Activated CD8-positive, alpha-beta T cell treated with anti-CD3 and anti-CD28 coated beads for 36 hours (primary cell): ENCODE measurements at regions of chr3 and their contacts with region 1.

Region 1: GRCh38 chr3:127598841-127599570 is 795 bp downstream of the MCM2 start:
- DNase-seq: no peak
- ATAC-seq: no peak
- H3K4me3 Mint-ChIP-seq: peak overlapping the region; percentile 91
- H3K27ac Mint-ChIP-seq: peak overlapping the region; percentile 98
- H3K4me1 Mint-ChIP-seq: peaks cover 39% of the 10 kb centered on the region
- H3K27me3 Mint-ChIP-seq: no peaks in the 10 kb centered on the region
- CTCF ChIP-seq: no peak

Region 2: GRCh38 chr3:127025456-127025855 is 573.5 kb before region 1 on chr3:
- CTCF ChIA-PET with region 1: no interaction called
- POLR2A ChIA-PET with region 1: no interaction called
- intact Hi-C with region 1: no loop called
- DNase-seq: no peak
- ATAC-seq: no peak
- H3K4me3 Mint-ChIP-seq: no peak overlapping the region
- H3K27ac Mint-ChIP-seq: no peak overlapping the region
- H3K4me1 Mint-ChIP-seq: no peaks in the 10 kb centered on the region
- H3K27me3 Mint-ChIP-seq: no peaks in the 10 kb centered on the region
- CTCF ChIP-seq: no peak

Region 3: DNA sequence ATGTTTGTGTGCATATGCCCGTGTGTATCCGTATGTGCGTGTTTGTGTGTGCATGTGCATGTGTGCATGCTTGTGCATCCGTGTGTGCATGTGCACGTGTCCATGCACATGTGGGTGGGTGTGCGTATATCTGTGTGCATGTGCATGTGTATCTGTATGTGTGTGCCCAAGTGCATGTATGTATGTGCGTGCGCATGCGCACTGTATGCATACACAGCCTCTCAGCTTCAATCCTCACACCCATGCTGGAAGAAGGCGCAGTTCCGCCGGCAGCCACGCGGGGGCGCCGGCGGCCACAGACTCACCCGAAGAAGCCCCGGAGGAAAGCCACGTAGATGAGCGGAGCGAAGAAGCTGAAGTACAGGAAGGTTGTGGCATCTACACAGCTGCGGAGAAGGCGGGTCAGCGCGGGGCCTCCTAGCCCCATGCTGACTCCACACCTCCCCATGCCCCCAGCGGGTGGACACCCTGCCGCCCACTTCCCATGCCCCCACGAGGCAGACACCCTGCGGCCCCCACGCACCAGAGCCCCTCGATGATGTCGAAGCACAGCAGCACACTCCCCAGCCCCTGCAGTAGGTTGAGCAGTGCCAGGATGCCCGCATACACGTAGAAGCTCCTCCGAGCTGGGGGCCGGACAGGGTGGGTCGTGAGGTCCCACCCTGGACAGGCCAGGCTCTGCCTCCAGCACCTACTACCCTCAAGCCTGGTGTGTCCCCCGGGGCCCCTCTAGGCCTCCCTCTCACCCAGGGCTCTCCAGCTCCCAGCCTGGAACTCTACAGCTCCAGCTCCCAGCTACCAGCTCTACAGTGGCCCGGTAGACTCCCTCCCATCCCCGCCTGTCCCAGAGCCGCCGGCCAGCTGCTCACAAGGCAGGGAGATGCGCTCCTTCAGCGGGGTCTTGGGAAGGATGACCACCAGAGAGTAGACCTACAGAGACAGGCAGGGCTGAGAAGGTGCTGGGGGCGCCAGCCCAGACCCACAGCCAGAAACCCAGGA is 23.8 kb before region 1 on chr3:
- CTCF ChIA-PET with region 1: interaction called, 19 read pairs
- POLR2A ChIA-PET with region 1: interaction called, 10 read pairs
- intact Hi-C with region 1: no loop called
- DNase-seq: peak; percentile 89
- ATAC-seq: peak; percentile 98
- H3K4me3 Mint-ChIP-seq: no peak overlapping the region
- H3K27ac Mint-ChIP-seq: no peak overlapping the region
- H3K4me1 Mint-ChIP-seq: peaks cover 14% of the 10 kb centered on the region
- H3K27me3 Mint-ChIP-seq: no peaks in the 10 kb centered on the region
- CTCF ChIP-seq: peak; percentile 86

Region 4: GRCh38 chr3:127612966-127613365 is 14.0 kb after region 1 on chr3:
- CTCF ChIA-PET with region 1: no interaction called
- POLR2A ChIA-PET with region 1: interaction called, 74 read pairs
- intact Hi-C with region 1: no loop called
- DNase-seq: no peak
- ATAC-seq: no peak
- H3K4me3 Mint-ChIP-seq: no peak overlapping the region
- H3K27ac Mint-ChIP-seq: no peak overlapping the region
- H3K4me1 Mint-ChIP-seq: peaks cover 10% of the 10 kb centered on the region
- H3K27me3 Mint-ChIP-seq: no peaks in the 10 kb centered on the region
- CTCF ChIP-seq: no peak

Region 5: GRCh38 chr3:127622772-127623576 is 24.0 kb after region 1 on chr3:
- CTCF ChIA-PET with region 1: interaction called, 3 read pairs
- POLR2A ChIA-PET with region 1: interaction called, 50 read pairs
- intact Hi-C with region 1: no loop called
- DNase-seq: no peak
- ATAC-seq: no peak
- H3K4me3 Mint-ChIP-seq: no peak overlapping the region
- H3K27ac Mint-ChIP-seq: no peak overlapping the region
- H3K4me1 Mint-ChIP-seq: peaks cover 17% of the 10 kb centered on the region
- H3K27me3 Mint-ChIP-seq: peaks cover 9% of the 10 kb centered on the region
- CTCF ChIP-seq: no peak

Region 6: DNA sequence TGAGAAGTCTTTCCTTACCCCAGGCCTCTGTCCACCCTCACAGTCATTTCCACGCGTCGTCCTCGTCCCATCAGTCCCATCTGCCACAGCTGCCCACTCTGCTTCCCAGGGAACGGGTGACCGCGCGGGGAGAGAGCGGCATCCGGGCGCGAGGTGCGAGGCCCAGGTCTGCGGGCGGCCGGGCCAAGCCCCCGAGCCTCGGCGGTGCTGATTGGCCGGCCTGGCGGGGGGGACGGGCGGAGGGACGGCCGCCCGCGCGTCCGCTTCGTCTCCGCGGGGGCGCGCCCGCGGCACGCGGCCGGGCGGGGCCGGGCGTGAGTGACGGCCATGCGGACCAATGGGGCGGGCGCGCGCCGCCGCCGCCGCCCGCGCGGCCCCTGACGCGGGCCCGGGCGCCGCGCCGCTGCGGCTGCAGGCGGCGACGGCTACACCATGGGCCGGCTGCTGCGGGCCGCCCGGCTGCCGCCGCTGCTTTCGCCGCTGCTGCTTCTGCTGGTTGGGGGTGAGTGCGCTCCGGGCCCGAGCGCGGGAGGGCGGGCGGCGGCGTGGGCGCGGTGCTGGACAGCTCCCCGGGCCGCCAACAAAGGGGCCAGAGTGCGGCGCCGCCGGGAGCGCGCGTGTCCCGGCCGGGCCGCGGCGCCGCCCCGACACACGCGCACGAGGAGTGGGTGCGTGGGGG is 29.9 kb after region 1 on chr3 and contains the start of gene PODXL2:
- CTCF ChIA-PET with region 1: interaction called, 3 read pairs
- POLR2A ChIA-PET with region 1: interaction called, 19 read pairs
- intact Hi-C with region 1: no loop called
- DNase-seq: peak; percentile 26
- ATAC-seq: peak; percentile 47
- H3K4me3 Mint-ChIP-seq: peak within 1 kb of the TSS; percentile 65
- H3K27ac Mint-ChIP-seq: no peak within 1 kb of the TSS
- H3K4me1 Mint-ChIP-seq: peaks cover 30% of the 10 kb centered on the region
- H3K27me3 Mint-ChIP-seq: peaks cover 30% of the 10 kb centered on the region
- CTCF ChIP-seq: no peak
- total RNA-seq, gene PODXL2: 1.1 to 1.3 TPM

Region 7: DNA sequence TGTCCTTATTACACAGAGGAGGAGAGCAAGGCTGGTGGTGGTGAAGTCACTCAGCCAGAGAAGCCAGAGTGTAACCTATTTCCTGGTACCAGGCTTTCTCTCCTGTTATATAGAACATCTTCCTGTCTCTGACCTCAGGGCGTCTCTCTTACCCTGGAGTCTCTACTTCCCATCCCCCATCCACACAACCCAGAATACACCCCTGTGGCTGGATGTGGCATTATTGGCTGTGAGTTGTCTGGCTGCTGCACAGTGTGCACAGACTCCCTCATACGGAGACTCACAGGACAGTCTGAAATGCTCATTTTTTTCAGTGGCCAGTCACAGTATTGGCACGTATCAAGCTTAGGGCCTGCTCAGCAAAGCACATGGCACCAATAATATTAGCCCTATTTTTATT is 38.5 kb after region 1 on chr3:
- CTCF ChIA-PET with region 1: no interaction called
- POLR2A ChIA-PET with region 1: interaction called, 10 read pairs
- intact Hi-C with region 1: no loop called
- DNase-seq: peak; percentile 60
- ATAC-seq: peak; percentile 97
- H3K4me3 Mint-ChIP-seq: no peak overlapping the region
- H3K27ac Mint-ChIP-seq: no peak overlapping the region
- H3K4me1 Mint-ChIP-seq: peaks cover 8% of the 10 kb centered on the region
- H3K27me3 Mint-ChIP-seq: peaks cover 5% of the 10 kb centered on the region
- CTCF ChIP-seq: no peak

Region 8: DNA sequence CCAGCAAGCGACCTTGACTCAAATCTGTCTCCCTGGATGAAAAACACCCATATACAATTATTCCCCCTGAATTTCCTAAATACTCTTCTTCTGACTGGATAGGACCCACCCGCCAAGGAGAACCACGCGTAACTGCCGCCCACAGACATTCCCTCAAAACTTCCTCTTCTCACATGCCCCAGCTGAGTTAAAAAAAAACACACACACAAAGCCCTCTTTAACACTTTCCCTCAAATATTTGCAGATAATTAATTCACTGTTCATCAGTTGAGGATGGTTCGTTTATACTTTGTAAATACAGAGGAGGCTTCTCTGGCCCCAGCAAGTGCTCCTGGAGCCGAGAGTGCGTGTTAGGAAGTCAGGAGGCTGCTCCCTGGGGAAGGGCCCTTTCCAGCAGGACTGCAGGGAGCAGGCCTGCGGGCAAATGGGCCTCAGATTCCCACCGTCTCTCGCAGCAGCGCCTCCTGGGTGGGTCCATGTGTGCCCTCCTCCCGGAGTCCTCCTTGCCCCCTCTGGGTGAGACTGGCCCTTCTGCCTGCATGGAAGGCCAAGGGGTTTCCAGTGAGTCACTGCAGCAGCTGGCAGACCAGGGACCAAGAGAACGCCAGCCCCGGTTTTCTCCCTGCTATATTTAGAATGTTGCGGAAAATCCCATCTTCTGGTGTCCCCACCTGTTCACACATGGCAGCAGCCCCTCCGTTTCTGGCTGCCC is 176.5 kb after region 1 on chr3:
- CTCF ChIA-PET with region 1: no interaction called
- POLR2A ChIA-PET with region 1: no interaction called
- intact Hi-C with region 1: no loop called
- DNase-seq: no peak
- ATAC-seq: no peak
- H3K4me3 Mint-ChIP-seq: no peak overlapping the region
- H3K27ac Mint-ChIP-seq: no peak overlapping the region
- H3K4me1 Mint-ChIP-seq: peaks cover 13% of the 10 kb centered on the region
- H3K27me3 Mint-ChIP-seq: no peaks in the 10 kb centered on the region
- CTCF ChIP-seq: no peak

Region 9: DNA sequence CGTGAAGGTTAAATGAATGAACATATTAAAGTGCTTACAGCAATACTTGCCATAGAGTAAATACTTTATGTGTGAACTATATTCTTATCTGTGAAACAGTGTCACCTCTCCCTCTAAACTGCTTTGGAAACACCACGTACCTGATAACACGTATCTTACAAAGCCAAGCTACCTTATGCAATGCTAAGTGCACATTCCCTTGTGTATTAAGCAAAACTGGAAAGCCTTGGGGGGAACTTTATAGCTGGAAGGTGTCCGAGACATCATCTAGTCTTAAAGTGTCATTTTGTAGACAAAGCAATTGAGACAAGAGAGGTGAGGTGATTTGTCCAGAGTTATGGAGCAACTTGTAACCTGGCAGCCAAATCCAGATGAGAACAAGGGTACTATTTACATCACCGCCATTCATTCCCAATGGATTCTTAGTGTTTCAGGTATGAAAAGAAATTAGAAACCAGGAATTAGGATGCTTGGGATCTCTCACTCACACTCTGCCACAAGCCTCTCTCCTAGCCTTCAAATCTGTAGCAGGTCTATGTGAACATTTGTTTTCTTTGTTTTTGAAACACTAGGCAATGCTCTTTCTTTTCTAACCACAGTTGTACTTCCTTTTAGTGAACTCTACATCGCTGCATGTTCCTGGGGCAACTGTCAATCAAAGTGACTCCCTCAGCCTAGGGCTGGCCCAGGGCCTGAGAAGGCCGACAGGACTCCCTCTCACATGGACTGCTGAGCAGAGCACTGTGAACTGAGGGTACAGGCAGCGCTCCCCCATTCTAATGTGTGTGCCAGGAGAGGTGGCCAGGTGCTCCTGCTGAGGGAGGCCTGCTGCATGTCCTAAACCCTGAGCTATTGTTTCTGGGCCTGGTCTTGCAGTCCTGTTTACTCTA is 237.2 kb after region 1 on chr3:
- CTCF ChIA-PET with region 1: no interaction called
- POLR2A ChIA-PET with region 1: no interaction called
- intact Hi-C with region 1: no loop called
- DNase-seq: no peak
- ATAC-seq: no peak
- H3K4me3 Mint-ChIP-seq: no peak overlapping the region
- H3K27ac Mint-ChIP-seq: no peak overlapping the region
- H3K4me1 Mint-ChIP-seq: peaks cover 4% of the 10 kb centered on the region
- H3K27me3 Mint-ChIP-seq: peaks cover 13% of the 10 kb centered on the region
- CTCF ChIP-seq: no peak

Region 10: DNA sequence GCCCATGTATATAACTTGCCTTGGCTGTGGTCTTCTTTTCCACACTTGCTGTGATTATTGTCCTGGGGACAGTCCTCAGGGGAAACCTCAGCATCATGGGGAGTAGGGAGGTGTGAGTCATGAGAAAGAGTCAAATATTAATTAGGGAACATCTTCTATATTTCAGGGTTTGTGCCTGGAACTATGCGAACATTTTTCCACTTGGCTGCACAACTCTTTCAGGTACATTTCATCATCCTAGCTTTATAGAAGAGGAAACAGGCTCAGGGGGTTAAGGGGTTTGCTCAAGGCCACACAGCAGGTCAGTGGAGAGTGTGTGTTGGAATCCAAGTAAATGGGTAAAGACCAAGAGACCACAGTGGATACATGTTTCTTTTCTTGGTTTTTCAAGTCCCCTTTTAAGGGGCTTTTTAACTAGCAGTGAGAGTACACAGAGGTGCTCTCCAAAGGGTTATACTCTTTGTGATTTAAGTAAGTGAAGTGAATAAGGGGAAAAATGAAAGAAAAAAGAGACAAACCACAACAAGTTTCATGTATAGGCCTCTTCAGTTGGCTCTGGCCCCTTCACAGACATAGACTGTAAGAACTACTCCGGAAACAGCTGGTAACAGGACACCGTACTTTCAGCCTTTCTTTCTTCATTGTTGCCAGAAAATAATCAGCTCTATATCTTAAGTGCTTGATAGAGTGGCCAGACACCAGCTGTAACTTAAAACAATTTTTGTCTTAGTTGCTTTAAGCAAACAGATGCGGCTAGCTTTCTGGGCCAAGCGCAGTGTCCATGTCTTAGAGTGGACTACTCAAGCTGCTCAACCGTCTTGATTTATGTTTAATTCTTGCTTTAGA is 618.9 kb after region 1 on chr3:
- CTCF ChIA-PET with region 1: no interaction called
- POLR2A ChIA-PET with region 1: no interaction called
- intact Hi-C with region 1: no loop called
- DNase-seq: peak; percentile 4
- ATAC-seq: peak; percentile 45
- H3K4me3 Mint-ChIP-seq: no peak overlapping the region
- H3K27ac Mint-ChIP-seq: peak overlapping the region; percentile 72
- H3K4me1 Mint-ChIP-seq: peaks cover 7% of the 10 kb centered on the region
- H3K27me3 Mint-ChIP-seq: no peaks in the 10 kb centered on the region
- CTCF ChIP-seq: no peak